GM10248 (cell line): ENCODE measurements at regions of chr2 and their contacts with region 1.

Region 1: GRCh38 chr2:46601328-46601963 is 122.1 kb downstream of the TMEM247 start:
- DNase-seq: no peak
- CTCF ChIP-seq: peak; percentile 35

Region 2: DNA sequence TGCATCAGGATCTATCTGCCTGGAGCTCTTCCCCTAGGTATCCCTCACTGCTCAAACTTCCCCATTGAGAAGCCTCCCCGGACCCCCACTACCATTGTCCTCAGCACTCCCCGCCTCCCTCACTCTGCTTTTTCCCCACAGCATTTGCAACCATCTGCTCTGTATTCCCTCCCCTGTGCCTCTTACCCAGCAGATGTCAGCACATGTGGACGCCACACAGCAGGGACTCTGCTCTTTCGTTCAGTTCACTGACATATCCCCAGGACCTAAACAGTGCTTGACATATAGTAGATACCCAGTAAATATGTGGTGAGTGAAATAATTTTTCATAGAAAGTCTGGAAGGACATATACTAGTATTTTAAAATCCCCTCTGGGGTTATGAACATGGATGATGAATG is 21.0 kb before region 1 on chr2:
- CTCF ChIA-PET with region 1: interaction called, 12 read pairs
- POLR2A ChIA-PET with region 1: no interaction called
- DNase-seq: no peak
- CTCF ChIP-seq: no peak

Region 3: DNA sequence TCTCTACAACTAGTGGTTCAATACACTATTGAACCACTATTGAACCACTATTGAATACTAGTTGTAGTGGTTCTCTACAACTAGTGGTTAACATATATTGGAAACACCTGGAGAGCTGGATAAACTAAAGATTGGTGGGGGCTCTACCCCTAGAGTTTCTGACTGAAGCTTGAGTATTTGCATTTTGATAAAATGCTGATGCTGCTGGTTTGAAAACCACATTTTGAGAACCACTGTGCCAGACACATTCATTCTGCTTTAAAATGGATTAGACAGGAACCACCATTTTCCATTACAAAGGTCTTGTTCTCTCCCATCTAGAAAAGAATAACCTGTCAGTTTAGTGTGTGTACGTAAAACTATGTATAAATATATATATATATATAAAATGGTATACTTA is 11.2 kb after region 1 on chr2:
- CTCF ChIA-PET with region 1: interaction called, 15 read pairs
- POLR2A ChIA-PET with region 1: no interaction called
- DNase-seq: no peak
- CTCF ChIP-seq: no peak

Region 4: GRCh38 chr2:47179388-47179787 is 577.9 kb after region 1 on chr2:
- CTCF ChIA-PET with region 1: no interaction called
- POLR2A ChIA-PET with region 1: interaction called, 10 read pairs
- DNase-seq: no peak
- CTCF ChIP-seq: no peak